Posterior vena cava (tissue), 2 donors: ENCODE measurements at regions of chr7 and their contacts with region 1.

Region 1: DNA sequence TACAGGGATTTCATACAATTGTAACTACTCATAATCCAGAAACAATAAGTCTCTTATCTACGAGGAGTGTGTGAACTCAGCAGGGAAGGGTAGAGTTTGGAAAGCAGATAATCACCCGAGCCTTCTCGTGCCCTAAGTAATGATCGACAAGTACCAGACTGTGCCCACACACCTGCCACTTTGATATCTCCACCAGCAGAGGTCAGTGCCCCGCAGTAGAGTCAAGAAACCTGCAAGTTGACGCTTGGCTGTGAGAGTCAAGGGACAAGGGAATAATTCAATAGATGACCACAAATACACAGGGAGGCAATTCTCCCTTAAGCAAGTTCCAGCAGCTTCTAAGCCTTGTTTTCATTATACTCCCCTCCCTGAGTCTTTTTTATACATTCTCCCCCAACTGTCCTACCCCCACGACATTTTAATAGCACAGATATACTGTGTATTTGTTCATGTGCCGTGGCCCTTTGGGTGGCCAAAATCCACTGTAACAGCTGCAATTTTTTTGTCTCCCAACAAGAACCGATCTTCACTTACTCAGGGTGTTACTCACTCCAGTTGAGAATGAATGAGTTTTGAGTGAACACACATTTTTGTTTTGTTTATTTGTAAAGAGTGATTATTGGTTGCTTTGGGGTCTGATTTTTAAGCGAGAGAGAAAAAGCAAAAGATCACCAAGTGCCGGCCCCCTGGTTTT is 106.9 kb upstream of the RHEB start:
- DNase-seq: no peak

Region 2: DNA sequence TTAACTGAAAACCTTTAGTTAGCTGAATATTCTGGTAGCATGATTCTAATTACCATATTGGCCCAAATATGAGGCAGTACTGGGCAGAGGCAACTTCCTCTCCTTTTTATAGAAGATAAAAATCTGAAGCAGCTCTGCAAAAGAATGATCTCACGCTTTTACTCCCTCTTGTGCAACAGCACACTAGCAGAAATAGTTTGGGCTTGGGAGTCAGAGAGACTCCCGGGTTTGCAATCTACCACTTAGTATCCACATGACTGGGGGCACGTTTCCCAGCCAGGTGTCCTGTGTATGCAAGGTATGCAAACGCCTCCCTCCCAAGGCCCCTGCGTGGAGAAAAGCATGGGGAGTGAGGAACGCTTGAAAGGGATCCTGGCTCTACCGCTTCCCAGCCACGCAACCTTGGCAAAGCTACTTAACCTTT is 59.7 kb before region 1 on chr7:
- intact Hi-C with region 1: no loop called
- DNase-seq: no peak

Region 3: GRCh38 chr7:151744656-151745638 is 118.4 kb after region 1 on chr7:
- intact Hi-C with region 1: loop called in 1 of 2 experiments (anchors 5 kb)
- DNase-seq: peak; percentile 89